ENCODE measurements at regions of chr13 and their contacts with region 1.

Region 1: GRCh38 chr13:79541426-79542049 is 60.6 kb downstream of the NDFIP2 start:
- DNase-seq: no peak
- H3K4me3 Mint-ChIP-seq: no peak overlapping the region
- H3K27ac Mint-ChIP-seq: no peak overlapping the region
- H3K4me1 Mint-ChIP-seq: peaks cover 2% of the 10 kb centered on the region
- H3K27me3 Mint-ChIP-seq: no peaks in the 10 kb centered on the region

Region 2: GRCh38 chr13:79413521-79413920 is 128.0 kb before region 1 on chr13:
- CTCF ChIA-PET with region 1: interaction called, 12 read pairs
- DNase-seq: no peak
- H3K4me3 Mint-ChIP-seq: no peak overlapping the region
- H3K27ac Mint-ChIP-seq: no peak overlapping the region
- H3K4me1 Mint-ChIP-seq: peaks cover 2% of the 10 kb centered on the region
- H3K27me3 Mint-ChIP-seq: no peaks in the 10 kb centered on the region

Region 3: GRCh38 chr13:79480954-79481684 is 60.4 kb before region 1 on chr13 and contains the start of gene NDFIP2:
- CTCF ChIA-PET with region 1: interaction called, 13 read pairs
- DNase-seq: peak; percentile 84
- H3K4me3 Mint-ChIP-seq: peak within 1 kb of the TSS; percentile 87
- H3K27ac Mint-ChIP-seq: peak within 1 kb of the TSS; percentile 72
- H3K4me1 Mint-ChIP-seq: peaks cover 46% of the 10 kb centered on the region
- H3K27me3 Mint-ChIP-seq: peaks cover 37% of the 10 kb centered on the region